HAP-1 (cell line): ENCODE measurements at regions of chr6 and their contacts with region 1.

Region 1: GRCh38 chr6:13328076-13328874 is at the start of gene TBC1D7:
- DNase-seq: peak; percentile 84 to 95
- H3K4me3 ChIP-seq: peak within 1 kb of the TSS; percentile 80
- H3K4me1 ChIP-seq: peaks cover 10% of the 10 kb centered on the region
- H3K27me3 ChIP-seq: no peaks in the 10 kb centered on the region

Region 2: GRCh38 chr6:12992770-12993169 is 335.5 kb before region 1 on chr6:
- in situ Hi-C with region 1: no loop called
- DNase-seq: no peak
- H3K4me3 ChIP-seq: no peak overlapping the region
- H3K4me1 ChIP-seq: no peaks in the 10 kb centered on the region
- H3K27me3 ChIP-seq: no peaks in the 10 kb centered on the region

Region 3: DNA sequence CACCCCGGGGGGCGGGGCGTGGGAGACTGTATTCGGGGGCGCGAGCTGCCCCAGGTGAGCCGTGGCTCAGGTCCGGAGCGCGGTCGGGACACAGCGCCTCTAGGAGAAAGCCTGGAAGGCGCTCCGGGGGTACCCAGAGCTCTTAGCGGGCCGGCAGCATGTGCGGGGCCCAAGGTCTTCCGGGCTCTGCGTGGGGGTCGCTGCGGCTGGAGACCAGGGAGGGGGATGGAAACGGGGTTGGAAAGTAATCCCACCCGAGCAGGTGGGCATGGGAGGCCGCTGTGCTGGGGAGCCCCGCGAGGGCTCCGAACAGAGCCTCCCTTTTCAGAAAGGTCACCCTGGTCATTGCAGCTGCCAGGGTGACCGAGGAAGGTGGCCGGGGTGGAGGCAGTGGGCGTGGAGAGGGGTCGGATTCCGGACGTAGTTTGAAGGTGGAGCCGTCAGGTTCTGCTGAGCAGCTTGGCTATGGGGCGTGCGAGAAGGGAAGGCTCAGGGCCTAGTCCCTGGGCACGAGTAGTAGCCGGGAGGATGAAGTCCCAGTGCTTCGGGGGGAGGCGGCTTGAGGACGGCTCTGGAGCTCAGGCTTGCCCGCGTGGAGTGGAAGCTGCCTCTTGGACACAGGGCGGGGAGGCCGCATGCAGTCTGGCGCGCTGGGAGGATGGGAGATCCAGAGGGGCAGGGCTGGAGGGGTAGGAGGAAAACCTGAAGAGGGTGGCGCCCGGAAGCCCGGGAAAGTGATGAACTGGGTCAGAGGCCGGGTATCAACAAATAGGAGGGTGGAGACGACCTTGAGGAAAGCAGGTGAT is 246.5 kb after region 1 on chr6 and contains the start of gene SIRT5:
- in situ Hi-C with region 1: loop called (anchors 25 kb)
- DNase-seq: peak; percentile 74 to 88
- H3K4me3 ChIP-seq: peak within 1 kb of the TSS; percentile 77
- H3K4me1 ChIP-seq: peaks cover 8% of the 10 kb centered on the region
- H3K27me3 ChIP-seq: no peaks in the 10 kb centered on the region

Region 4: DNA sequence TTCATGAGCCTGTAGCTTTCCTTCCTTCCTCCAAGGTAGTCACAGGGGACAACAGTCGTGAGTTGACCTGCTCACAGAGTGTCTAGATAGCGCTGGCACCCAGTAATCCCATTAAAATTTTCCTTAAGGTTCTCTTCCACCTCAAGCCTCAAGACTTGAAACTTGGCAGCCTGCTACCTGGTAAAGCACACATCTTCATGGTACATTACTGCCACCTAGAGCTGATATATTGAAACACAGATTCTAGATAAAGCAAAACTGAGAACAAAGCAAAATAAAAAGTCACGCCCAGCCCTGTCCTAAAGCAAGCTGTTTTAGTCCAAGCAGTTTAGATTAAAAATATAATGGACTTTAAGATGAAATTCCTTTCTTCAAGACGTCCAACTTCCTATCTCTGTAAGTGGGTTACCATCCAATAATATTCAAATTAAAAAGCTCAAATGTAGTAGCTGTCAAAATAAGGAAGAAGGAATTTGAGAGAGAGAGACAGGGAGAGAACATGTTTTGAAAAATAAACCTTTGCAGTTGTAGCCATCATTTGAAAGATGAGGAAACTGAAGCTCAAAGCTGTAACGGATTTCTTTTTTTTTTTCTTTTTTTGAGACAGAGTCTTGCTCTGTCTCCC is 738.6 kb after region 1 on chr6:
- in situ Hi-C with region 1: loop called (anchors 25 kb)
- DNase-seq: peak; percentile 55 to 77
- H3K4me3 ChIP-seq: no peak overlapping the region
- H3K4me1 ChIP-seq: peaks cover 2% of the 10 kb centered on the region; the same call in 1 of the 2 replicates
- H3K27me3 ChIP-seq: no peaks in the 10 kb centered on the region